ENCODE measurements at regions of chr1 and their contacts with region 1.

Region 1: DNA sequence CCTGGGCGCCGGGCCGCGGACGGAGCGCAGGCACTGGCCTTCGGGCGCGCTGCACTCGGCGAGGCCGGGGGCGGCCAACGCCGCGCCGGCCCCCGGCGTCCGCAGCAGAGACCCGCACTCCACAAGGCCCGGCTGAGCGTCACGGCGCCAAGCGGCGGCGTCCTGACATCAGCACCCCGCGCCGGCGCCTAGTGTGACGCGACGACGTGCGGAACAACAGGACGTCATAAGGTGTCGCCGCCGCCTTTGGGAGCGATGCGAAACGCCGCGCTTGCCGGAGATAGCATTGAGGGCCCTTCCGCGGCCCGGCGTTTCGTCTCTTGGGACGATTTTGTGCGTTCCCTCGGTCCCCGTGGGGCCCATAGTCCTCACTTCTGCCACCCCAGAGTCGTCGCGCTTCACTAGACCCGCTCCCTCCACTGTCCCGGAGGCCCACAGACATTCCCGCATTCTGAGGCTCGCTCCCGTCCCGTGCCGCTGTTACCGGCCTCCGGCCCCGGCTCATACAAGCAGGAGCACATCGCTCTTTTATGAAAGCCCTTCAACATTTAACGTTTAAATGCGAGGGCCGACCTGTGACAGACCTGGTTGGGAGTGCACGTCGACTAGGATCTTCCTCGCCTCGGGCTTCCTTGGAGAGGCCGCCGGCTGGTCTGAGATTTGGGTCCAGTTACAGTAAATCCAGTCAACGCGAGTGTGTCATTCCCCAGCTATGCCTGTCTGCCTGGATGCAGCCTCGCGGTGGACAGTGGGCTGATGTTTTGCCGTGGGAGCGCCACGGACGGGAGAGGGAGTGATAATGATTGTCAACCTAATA is at the start of gene SSU72:
- DNase-seq: peak; percentile 95
- ATAC-seq: peak; percentile 85
- H3K4me3 Mint-ChIP-seq: peak within 1 kb of the TSS; percentile 96
- H3K27ac Mint-ChIP-seq: peak within 1 kb of the TSS; percentile 98
- H3K4me1 Mint-ChIP-seq: peaks cover 37% of the 10 kb centered on the region
- H3K27me3 Mint-ChIP-seq: peaks cover 4% of the 10 kb centered on the region
- CTCF ChIP-seq: no peak
- total RNA-seq, gene SSU72: 111 and 118 TPM in 2 replicates

Region 2: DNA sequence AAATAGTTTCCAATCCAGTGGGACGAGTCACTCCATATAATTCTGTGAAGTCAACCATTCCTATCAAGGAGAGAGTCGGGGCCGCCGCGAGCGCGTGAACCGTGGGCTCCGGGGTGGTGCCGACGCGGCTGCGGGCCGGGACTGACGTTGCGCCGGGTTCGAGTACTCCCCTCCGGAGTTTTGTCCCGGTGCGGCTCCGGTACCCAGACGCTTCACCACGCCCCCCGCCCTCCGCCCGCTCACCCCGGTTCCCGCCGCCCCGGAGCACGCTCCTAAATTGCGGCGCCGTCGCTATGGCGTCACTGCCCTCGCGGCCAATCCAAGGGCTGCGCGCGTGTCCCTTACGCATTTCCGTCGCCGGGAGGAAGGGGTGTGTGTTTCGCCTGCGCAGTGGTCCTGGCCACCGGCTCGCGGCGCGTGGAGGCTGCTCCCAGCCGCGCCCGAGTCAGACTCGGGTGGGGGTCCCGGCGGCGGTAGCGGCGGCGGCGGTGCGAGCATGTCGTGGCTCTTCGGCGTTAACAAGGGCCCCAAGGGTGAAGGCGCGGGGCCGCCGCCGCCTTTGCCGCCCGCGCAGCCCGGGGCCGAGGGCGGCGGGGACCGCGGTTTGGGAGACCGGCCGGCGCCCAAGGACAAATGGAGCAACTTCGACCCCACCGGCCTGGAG is 103.4 kb before region 1 on chr1 and contains the start of gene ATAD3B:
- CTCF ChIA-PET with region 1: no interaction called
- POLR2A ChIA-PET with region 1: no interaction called
- intact Hi-C with region 1: loop called (anchors 1 kb)
- DNase-seq: peak; percentile 84
- ATAC-seq: peak; percentile 95
- H3K4me3 Mint-ChIP-seq: peak within 1 kb of the TSS; percentile 90
- H3K27ac Mint-ChIP-seq: peak within 1 kb of the TSS; percentile 82
- H3K4me1 Mint-ChIP-seq: peaks cover 25% of the 10 kb centered on the region
- H3K27me3 Mint-ChIP-seq: no peaks in the 10 kb centered on the region
- CTCF ChIP-seq: no peak
- total RNA-seq, gene ATAD3B: 47.4 and 49.5 TPM in 2 replicates

Region 3: DNA sequence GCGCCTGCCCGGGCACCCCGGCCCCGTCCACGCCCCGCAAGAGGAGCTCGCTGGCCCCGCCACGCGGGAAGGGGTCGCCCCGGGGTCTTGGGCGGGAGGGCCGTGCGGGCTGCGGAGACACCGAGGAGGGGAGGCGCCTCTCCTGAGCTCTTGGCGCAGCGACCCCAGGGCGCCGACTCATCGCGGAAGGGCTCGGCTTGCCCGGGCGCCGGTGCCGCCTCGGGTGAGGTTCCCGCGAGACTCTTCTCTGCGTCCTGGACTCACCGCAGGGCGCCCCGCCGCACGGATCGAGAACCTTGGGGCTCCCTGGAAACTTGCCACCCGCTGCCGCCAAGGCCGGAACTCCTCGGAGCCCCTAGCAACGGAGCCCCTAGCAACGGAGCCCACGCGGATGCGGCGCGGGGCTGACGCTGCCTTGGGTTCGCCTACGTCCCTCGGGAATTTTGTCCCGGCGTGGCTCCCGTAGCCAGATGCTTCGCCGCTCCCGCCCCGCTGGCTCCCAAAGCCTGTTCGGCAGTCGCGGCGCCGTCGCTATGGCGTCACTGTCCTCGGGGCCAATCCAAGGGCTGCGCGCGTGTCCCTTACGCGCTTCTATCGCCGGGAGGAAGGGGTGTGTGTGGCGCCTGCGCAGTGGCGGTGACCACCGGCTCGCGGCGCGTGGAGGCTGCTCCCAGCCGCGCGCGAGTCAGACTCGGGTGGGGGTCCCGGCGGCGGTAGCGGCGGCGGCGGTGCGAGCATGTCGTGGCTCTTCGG is 63.2 kb before region 1 on chr1 and contains the start of gene ATAD3A:
- CTCF ChIA-PET with region 1: no interaction called
- POLR2A ChIA-PET with region 1: no interaction called
- intact Hi-C with region 1: loop called (anchors 2 kb)
- DNase-seq: peak; percentile 87
- ATAC-seq: peak; percentile 92
- H3K4me3 Mint-ChIP-seq: peak within 1 kb of the TSS; percentile 91
- H3K27ac Mint-ChIP-seq: peak within 1 kb of the TSS; percentile 87
- H3K4me1 Mint-ChIP-seq: peaks cover 14% of the 10 kb centered on the region
- H3K27me3 Mint-ChIP-seq: no peaks in the 10 kb centered on the region
- CTCF ChIP-seq: no peak
- total RNA-seq, gene ATAD3A: 26.1 and 32.4 TPM in 2 replicates

Region 4: DNA sequence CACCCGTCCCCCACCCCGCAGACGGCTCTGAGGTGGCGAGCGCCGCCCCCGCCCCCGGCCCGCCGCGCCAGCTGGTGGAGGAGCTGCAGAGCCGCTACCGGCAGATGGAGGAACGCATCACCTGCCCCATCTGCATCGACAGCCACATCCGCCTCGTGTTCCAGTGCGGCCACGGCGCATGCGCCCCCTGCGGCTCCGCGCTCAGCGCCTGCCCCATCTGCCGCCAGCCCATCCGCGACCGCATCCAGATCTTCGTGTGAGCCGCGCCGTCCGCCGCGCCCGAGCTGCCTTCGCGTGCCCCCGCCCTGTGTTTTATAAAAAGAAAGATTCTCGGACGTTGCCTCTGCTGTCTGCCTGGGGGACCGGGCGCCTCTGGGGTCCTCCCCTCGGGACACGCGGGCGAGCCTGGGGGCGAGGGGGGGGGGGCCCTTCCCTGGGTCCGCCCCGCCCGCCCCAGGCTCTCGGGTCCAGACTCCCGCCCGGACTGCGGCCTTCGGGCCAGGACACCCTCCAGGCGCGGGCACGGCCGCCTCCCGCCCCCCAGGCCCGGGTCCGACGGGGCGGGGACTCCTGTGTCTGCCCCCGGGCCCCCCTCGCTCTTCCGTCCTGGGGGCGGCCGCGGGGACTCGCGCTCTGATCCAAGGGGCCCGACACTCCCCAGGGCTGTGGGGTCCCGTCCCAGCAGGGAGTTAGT is 55.5 kb after region 1 on chr1:
- CTCF ChIA-PET with region 1: no interaction called
- POLR2A ChIA-PET with region 1: interaction called, 3 read pairs
- intact Hi-C with region 1: loop called (anchors 2 kb)
- DNase-seq: peak; percentile 90
- ATAC-seq: peak; percentile 80
- H3K4me3 Mint-ChIP-seq: peak overlapping the region; percentile 82
- H3K27ac Mint-ChIP-seq: peak overlapping the region; percentile 82
- H3K4me1 Mint-ChIP-seq: peaks cover 6% of the 10 kb centered on the region
- H3K27me3 Mint-ChIP-seq: peaks cover 4% of the 10 kb centered on the region
- CTCF ChIP-seq: no peak

Region 5: DNA sequence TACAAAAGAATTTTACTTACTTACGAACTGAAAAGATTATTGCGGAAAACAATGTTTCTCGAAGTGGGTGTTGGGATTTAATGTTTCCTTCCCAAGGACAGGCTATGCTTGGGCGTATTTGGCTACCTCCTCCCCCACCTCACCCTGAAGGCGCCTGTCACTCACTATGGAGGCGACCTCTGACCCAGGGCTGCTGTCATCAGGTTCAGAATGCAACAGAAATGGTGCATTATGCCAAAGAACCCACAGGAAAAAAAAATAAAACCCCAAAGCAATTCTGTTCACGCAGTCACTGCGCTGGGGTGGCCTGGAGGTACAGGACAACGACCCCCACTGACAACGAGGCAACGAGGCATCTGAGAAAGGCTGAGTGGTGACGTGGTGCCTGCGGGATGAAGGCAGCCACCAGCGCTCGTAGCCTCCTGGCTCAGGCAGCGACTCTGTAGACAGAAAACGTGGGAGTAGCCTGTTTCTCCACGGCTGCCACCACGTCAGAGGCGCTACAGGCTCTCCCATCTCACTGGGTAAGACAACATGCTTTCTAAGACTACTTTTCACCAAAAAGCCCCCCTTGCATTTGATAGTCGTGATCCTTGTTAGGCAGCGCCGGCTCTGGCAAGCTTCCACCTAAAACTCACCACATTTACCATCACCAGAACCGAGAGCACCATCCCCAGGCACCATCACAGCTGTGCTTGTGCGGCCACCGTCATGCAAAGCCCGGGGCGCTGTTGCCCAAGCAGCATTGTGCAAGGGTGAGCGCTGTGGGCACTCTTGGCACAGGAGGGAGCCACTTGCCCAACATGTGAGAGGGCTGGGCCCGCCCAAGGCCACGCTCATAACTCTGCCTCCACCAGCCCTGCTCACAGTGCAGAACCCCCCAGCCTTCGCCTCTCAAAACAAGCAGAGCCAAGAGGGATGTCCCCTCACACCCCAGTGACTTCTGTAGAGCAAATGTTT is 189.0 kb after region 1 on chr1:
- CTCF ChIA-PET with region 1: no interaction called
- POLR2A ChIA-PET with region 1: no interaction called
- intact Hi-C with region 1: no loop called
- DNase-seq: no peak
- ATAC-seq: peak; percentile 61
- H3K4me3 Mint-ChIP-seq: no peak overlapping the region
- H3K27ac Mint-ChIP-seq: peak overlapping the region; percentile 26
- H3K4me1 Mint-ChIP-seq: peaks cover 8% of the 10 kb centered on the region
- H3K27me3 Mint-ChIP-seq: no peaks in the 10 kb centered on the region
- CTCF ChIP-seq: no peak

Region 6: DNA sequence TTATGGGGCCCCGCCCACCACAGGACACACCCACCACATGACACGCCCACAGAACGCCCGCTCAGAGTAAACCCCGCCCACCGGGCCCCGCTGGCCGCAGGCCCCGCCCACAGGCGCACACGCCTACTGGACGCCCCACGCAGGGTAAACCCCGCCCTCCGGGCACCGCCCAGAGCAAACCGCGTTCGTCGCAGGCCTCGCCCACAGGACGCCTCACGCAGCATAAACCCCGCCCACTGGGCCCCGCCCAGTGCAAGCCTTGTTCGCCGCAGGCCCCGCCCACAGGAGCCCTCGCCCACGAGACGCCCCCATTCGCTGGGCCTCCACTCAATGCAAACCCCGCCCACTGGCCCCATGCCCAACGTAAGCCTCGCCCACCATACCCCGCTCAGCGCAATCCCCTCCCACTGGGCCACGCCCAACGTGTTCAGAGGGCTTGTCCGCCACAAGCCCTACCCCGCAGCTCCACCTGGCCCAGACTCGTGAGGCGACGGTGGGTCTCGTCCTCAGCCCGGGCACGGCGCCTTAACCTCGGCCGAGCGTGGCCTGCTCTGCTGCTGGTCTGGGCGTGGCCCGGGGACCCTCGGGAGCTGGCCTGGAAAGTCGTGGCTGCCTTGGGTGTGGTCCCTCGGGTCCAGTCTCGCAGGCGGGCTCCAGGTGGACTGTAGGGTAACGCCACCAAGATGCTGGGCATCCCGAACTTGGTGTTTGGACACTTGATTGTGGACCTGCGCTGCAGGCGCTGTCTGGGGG is 344.6 kb after region 1 on chr1:
- CTCF ChIA-PET with region 1: no interaction called
- POLR2A ChIA-PET with region 1: no interaction called
- intact Hi-C with region 1: loop called (anchors 1 kb)
- DNase-seq: peak; percentile 100
- ATAC-seq: peak; percentile 90
- H3K4me3 Mint-ChIP-seq: peak overlapping the region; percentile 73
- H3K27ac Mint-ChIP-seq: peak overlapping the region; percentile 56
- H3K4me1 Mint-ChIP-seq: no peaks in the 10 kb centered on the region
- H3K27me3 Mint-ChIP-seq: no peaks in the 10 kb centered on the region
- CTCF ChIP-seq: no peak

Region 7: GRCh38 chr1:2205191-2205952 is 630.4 kb after region 1 on chr1:
- CTCF ChIA-PET with region 1: no interaction called
- POLR2A ChIA-PET with region 1: no interaction called
- intact Hi-C with region 1: no loop called
- DNase-seq: peak; percentile 86
- ATAC-seq: peak; percentile 93
- H3K4me3 Mint-ChIP-seq: peak overlapping the region; percentile 72
- H3K27ac Mint-ChIP-seq: no peak overlapping the region
- H3K4me1 Mint-ChIP-seq: peaks cover 29% of the 10 kb centered on the region
- H3K27me3 Mint-ChIP-seq: no peaks in the 10 kb centered on the region
- CTCF ChIP-seq: no peak

Measured in activated B cell treated with CpG ODN at 0.5 μM for 24 hours (primary cell).